Activated naive CD4-positive, alpha-beta T cell treated with anti-CD3 and anti-CD28 coated beads for 36 hours (primary cell): ENCODE measurements at regions of chr5 and their contacts with region 1.

Region 1: DNA sequence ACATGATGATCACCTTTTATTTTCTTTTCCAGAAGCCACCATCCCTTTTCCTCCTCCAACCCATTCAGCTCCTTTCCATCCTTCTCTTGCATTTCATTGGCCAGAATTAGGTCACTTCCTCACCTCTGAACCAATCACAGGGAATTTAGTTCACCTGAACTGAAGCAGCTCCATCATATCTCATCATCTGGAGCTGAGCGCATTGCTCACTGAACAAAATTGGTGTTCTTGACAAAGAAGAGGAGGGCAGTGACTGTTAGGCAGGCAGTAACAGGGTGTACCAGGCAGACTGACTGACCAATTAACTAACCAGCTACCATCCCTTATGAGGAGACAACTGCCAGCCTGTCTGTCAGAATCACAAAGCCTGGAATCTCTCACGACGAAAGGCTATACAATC is 1.8 kb upstream of the ZNF354A start:
- DNase-seq: no peak
- H3K4me3 Mint-ChIP-seq: no peak overlapping the region
- H3K27ac Mint-ChIP-seq: no peak overlapping the region
- H3K4me1 Mint-ChIP-seq: peaks cover 13% of the 10 kb centered on the region
- H3K27me3 Mint-ChIP-seq: no peaks in the 10 kb centered on the region

Region 2: GRCh38 chr5:178626484-178627258 is 105.6 kb before region 1 on chr5 and contains the start of gene CLK4:
- CTCF ChIA-PET with region 1: interaction called, 4 read pairs
- intact Hi-C with region 1: loop called (anchors 1 kb)
- DNase-seq: peak; percentile 97
- H3K4me3 Mint-ChIP-seq: peak within 1 kb of the TSS; percentile 97
- H3K27ac Mint-ChIP-seq: peak within 1 kb of the TSS; percentile 95
- H3K4me1 Mint-ChIP-seq: peaks cover 28% of the 10 kb centered on the region
- H3K27me3 Mint-ChIP-seq: no peaks in the 10 kb centered on the region
- total RNA-seq, gene CLK4: 33.9 to 34.9 TPM

Region 3: DNA sequence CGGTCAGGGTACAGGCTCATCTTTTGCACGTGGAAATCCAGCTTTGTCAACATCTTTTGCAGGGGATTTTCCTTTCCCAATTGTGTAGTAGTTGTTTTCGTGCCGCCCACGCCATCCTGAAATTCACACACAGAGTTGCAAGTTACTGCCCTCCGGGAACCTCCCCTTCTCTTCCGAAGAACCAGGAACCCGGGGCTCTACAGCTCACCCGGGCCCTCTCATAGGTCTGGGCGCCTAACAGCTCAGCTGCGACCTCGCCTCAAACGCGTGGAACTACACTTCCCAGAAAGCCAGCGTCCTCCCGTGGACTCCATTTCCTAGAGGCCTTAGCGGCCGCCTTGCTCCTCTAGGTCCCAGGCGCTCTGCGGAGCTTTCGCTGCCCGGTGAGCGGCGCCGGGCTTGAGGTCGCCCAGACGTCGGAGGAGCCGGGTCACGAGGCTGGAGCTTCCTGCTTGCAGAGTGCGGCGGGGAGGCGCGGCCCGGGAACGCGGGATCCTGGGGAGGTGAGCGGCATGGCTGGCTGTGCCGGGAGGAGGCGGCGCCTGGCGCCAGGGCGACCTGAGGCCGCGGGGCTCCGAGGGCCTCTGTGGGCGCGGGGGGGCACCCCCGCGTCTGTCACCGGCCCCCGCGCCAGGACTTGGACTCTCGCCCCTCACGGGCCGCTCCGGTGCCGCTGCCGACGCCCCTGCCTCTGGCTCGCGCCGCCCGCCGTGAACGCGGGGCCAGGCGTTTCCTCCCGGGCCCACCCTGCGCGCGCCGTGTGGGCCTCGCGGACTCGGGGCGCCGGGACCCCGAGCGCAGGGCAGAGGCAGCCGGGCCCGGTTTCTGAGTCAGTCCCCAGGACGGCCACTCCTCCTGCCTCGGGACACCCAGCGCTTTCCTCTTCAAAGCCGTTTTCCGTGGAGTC is 127.6 kb after region 1 on chr5 and contains the start of gene ZNF354B:
- CTCF ChIA-PET with region 1: interaction called, 3 read pairs
- intact Hi-C with region 1: loop called (anchors 1 kb)
- DNase-seq: peak; percentile 91
- H3K4me3 Mint-ChIP-seq: peak within 1 kb of the TSS; percentile 89
- H3K27ac Mint-ChIP-seq: peak within 1 kb of the TSS; percentile 66
- H3K4me1 Mint-ChIP-seq: peaks cover 21% of the 10 kb centered on the region
- H3K27me3 Mint-ChIP-seq: no peaks in the 10 kb centered on the region
- total RNA-seq, gene ZNF354B: 8.6 to 8.9 TPM

Region 4: DNA sequence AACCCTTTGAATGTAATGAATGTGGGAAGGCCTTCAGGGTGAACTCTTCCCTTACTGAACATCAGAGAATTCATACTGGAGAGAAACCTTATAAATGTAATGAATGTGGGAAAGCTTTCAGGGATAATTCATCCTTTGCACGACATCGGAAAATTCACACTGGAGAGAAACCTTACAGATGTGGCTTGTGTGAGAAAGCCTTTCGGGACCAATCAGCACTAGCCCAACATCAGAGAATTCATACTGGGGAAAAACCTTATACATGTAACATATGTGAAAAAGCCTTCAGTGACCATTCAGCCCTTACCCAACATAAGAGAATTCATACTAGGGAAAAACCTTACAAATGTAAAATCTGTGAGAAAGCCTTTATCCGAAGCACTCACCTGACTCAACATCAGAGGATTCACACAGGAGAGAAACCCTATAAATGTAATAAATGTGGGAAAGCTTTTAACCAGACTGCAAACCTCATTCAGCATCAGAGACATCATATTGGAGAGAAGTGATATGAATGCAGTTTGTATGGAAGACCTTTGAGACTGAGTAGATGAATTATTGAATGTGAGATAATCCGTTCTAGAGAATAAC is 233.3 kb after region 1 on chr5:
- CTCF ChIA-PET with region 1: no interaction called
- intact Hi-C with region 1: no loop called
- DNase-seq: no peak
- H3K4me3 Mint-ChIP-seq: no peak overlapping the region
- H3K27ac Mint-ChIP-seq: no peak overlapping the region
- H3K4me1 Mint-ChIP-seq: no peaks in the 10 kb centered on the region
- H3K27me3 Mint-ChIP-seq: no peaks in the 10 kb centered on the region

Region 5: GRCh38 chr5:179023528-179024430 is 291.5 kb after region 1 on chr5 and contains the start of gene ZNF879:
- CTCF ChIA-PET with region 1: no interaction called
- intact Hi-C with region 1: loop called (anchors 1 kb)
- DNase-seq: peak; percentile 95
- H3K4me3 Mint-ChIP-seq: peak within 1 kb of the TSS; percentile 97
- H3K27ac Mint-ChIP-seq: peak within 1 kb of the TSS; percentile 90
- H3K4me1 Mint-ChIP-seq: peaks cover 7% of the 10 kb centered on the region
- H3K27me3 Mint-ChIP-seq: peaks cover 1% of the 10 kb centered on the region
- total RNA-seq, gene ZNF879: 1.8 to 2.0 TPM

Region 6: GRCh38 chr5:179142434-179143198 is 410.3 kb after region 1 on chr5:
- CTCF ChIA-PET with region 1: no interaction called
- intact Hi-C with region 1: loop called (anchors 5 kb)
- DNase-seq: peak; percentile 75
- H3K4me3 Mint-ChIP-seq: no peak overlapping the region
- H3K27ac Mint-ChIP-seq: peak overlapping the region; percentile 79
- H3K4me1 Mint-ChIP-seq: peaks cover 48% of the 10 kb centered on the region
- H3K27me3 Mint-ChIP-seq: no peaks in the 10 kb centered on the region

Region 7: DNA sequence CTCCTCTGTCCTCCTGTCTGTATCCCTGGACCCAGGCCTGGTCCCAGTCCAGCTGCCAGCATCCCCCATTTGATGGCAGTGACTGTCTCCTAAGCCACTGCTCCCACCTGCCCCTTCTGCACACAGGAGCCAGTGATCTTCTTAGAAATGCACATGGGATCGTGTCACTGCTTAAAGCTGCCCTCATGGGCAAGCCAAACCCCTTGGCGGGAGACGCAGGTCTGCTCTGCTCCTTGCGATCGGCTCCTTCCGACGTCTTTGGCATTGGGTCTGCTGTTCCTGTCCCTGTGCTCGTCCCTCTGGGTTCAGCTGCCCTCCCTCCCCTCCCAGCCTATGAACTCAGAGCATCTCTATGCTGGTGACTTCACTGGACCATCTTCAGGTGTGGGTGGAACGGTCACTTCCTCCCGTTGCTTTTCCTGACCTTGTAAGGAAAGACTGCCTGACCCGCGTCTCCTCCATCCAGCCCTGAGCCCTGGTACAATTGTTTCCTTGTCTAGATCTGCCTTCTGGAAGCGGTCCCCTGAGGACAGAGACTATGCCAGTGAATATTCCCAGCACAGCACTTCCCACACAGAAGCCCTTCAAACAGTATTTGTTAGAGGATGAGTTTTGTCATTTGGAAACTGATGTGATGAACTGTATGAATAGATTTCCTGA is 444.4 kb after region 1 on chr5:
- CTCF ChIA-PET with region 1: no interaction called
- intact Hi-C with region 1: no loop called
- DNase-seq: no peak
- H3K4me3 Mint-ChIP-seq: no peak overlapping the region
- H3K27ac Mint-ChIP-seq: no peak overlapping the region
- H3K4me1 Mint-ChIP-seq: no peaks in the 10 kb centered on the region
- H3K27me3 Mint-ChIP-seq: peaks cover 10% of the 10 kb centered on the region

Region 8: DNA sequence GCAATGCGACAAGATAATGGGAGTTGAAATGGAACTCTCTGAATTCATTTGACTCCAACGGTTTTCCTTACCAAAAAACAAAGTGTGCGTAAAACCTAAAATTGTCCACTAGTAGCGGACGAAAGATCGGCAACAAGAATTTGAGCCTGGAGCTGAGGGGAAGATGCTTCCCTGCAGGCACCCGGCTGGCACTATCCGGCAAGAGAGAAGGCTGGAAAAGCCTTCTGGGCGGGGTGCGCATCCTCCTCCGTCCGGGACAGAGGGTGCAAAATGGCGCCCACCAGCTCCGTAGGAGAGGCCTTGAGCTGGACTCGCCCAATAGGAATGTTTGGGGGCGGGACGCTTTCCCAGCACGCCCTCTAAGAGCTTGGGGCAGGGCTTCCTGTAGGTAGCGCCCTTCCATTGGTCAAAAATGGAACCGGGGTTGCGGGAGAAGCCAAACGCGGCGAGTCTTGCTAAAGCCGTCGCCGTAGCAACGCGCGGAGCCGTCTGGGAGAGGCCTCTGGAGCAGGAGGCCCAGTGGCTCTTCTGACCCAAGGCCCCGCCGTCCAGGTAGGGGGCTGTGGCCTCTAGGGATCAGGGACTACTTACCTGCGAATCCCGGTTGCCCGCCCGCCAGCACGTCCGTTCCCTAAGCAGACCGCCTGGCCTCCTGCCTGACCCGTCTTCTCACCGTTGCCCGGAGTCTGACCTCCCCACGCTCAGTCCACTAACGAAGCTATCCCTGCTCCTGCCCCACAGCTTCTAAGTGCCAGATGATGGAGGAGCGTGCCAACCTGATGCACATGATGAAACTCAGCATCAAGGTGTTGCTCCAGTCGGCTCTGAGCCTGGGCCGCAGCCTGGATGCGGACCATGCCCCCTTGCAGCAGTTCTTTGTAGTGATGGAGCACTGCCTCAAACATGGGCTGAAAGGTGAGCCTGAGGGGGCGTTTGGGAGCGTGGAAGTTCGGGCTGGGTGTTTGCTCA is 827.3 kb after region 1 on chr5:
- CTCF ChIA-PET with region 1: no interaction called
- intact Hi-C with region 1: loop called (anchors 1 kb)
- DNase-seq: peak; percentile 98
- H3K4me3 Mint-ChIP-seq: peak overlapping the region; percentile 93
- H3K27ac Mint-ChIP-seq: peak overlapping the region; percentile 91
- H3K4me1 Mint-ChIP-seq: peaks cover 14% of the 10 kb centered on the region
- H3K27me3 Mint-ChIP-seq: no peaks in the 10 kb centered on the region